Right ventricle myocardium superior (tissue), 1 donor: ENCODE measurements at regions of chr19 and their contacts with region 1.

Region 1: DNA sequence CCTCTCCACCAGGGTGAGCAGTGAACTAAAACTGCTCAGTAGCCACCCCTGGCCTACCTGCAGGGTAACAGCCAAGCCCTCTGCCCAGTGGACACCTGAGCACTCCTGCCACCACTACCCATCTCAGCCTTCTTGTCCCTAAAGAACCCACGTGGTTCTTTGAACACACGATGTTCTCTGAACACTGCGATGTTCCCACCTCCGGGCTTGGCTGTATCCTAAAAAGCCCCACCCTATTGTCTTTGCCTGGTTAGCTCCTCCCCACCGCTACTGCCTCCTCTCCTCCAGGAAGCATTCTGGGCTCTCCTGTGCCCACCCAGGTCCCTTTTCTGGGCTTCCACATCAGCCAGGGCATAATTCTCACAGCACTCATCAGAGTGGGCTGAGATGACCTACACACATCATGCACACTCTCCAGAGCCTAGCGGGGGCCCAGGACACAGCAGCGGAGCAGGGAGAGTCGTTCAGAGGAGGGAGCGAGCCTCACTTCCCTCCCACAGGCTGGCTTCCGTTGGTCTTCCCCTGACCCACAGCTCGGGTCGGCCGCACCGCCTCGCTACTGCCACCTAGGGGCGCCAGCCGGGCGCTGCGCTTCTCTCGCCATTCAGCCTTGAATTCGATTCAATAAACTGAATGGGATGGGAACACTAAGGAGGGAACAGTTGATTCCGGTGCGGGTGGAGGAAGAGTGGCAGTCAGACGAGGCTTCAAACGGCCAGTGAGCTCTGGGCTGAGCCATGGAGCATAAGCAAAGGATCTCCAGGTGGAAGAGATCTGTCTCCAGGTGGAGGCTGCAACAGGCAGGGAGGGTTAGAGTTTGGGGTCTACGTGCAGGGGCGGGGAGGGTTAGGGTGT is 3.2 kb downstream of the ELAVL1 start:
- DNase-seq: peak; percentile 90
- ATAC-seq: peak; percentile 81

Region 2: GRCh38 chr19:7943444-7944176 is 58.6 kb before region 1 on chr19 and contains the start of gene TIMM44:
- intact Hi-C with region 1: loop called (anchors 5 kb)
- DNase-seq: peak; percentile 99
- ATAC-seq: peak; percentile 98
- total RNA-seq, gene TIMM44: 116 TPM